Activated CD4-positive, alpha-beta memory T cell treated with anti-CD3 and anti-CD28 coated beads for 36 hours (primary cell): ENCODE measurements at regions of chr16 and their contacts with region 1.

Region 1: GRCh38 chr16:24729362-24729984 is at the start of gene TNRC6A:
- DNase-seq: peak; percentile 88
- H3K4me3 Mint-ChIP-seq: peak within 1 kb of the TSS; percentile 98
- H3K27ac Mint-ChIP-seq: peak within 1 kb of the TSS; percentile 98
- H3K4me1 Mint-ChIP-seq: peaks cover 49% of the 10 kb centered on the region
- H3K27me3 Mint-ChIP-seq: no peaks in the 10 kb centered on the region
- total RNA-seq, gene TNRC6A: 31.7 to 36.3 TPM

Region 2: GRCh38 chr16:24589997-24590396 is 139.5 kb before region 1 on chr16:
- CTCF ChIA-PET with region 1: no interaction called
- POLR2A ChIA-PET with region 1: no interaction called
- intact Hi-C with region 1: no loop called
- DNase-seq: no peak
- H3K4me3 Mint-ChIP-seq: no peak overlapping the region
- H3K27ac Mint-ChIP-seq: no peak overlapping the region
- H3K4me1 Mint-ChIP-seq: peaks cover 11% of the 10 kb centered on the region
- H3K27me3 Mint-ChIP-seq: peaks cover 7% of the 10 kb centered on the region

Region 3: DNA sequence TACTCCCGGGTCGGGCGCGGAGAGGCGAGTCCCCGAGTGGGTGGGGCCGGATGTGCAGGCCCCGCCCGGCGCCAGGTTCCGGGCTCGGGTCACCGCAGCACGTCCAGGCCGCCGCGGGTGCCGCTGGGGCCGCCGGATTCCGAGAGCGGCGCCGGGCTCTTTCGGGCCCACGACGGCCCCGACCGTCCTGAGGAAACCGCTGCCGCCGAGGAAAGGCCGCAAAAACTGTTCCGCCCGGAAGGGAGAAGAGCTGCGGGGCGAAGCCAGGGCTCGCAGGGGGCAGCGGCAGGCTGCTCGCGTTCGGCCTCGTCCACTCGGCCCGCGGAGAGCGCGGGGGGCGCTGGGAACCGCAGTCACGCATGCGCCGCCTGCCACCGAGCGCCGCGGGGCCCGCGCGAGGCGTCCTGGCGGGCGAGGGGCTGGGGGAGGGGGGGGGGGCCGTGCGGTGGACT is 528.1 kb after region 1 on chr16 and contains the start of gene ZKSCAN2:
- CTCF ChIA-PET with region 1: no interaction called
- POLR2A ChIA-PET with region 1: no interaction called
- intact Hi-C with region 1: loop called (anchors 10 kb)
- DNase-seq: peak; percentile 91
- H3K4me3 Mint-ChIP-seq: peak within 1 kb of the TSS; percentile 95
- H3K27ac Mint-ChIP-seq: peak within 1 kb of the TSS; percentile 91
- H3K4me1 Mint-ChIP-seq: peaks cover 54% of the 10 kb centered on the region
- H3K27me3 Mint-ChIP-seq: no peaks in the 10 kb centered on the region
- total RNA-seq, gene ZKSCAN2: 4.6 to 5.1 TPM